IMR-90 (cell line): ENCODE measurements at regions of chr2 and their contacts with region 1.

Region 1: GRCh38 chr2:69816923-69817542 is 12.4 kb upstream of the GMCL1 start:
- DNase-seq: peak; percentile 89
- ATAC-seq: peak; percentile 72; the same call in 1 of the 2 replicates
- H3K4me3 ChIP-seq: no peak overlapping the region
- H3K27ac ChIP-seq: no peak overlapping the region
- H3K4me1 ChIP-seq: 0 out of 2 replicates have a peak, but pooled peaks cover 3% of the 10 kb centered on the region
- H3K27me3 ChIP-seq: no peaks in the 10 kb centered on the region
- CTCF ChIP-seq: peak; percentile 86
- POLR2A ChIP-seq: no peak
- RAD21 ChIP-seq: peak; percentile 77

Region 2: GRCh38 chr2:69559442-69560146 is 257.4 kb before region 1 on chr2:
- CTCF ChIA-PET with region 1: interaction called, 3 read pairs
- POLR2A ChIA-PET with region 1: no interaction called
- dilution Hi-C with region 1: no loop called
- in situ Hi-C with region 1: loop called (anchors 10 kb)
- intact Hi-C with region 1: loop called (anchors 10 kb)
- DNase-seq: peak; percentile 62
- ATAC-seq: peak; percentile 74
- H3K4me3 ChIP-seq: no peak overlapping the region
- H3K27ac ChIP-seq: no peak overlapping the region
- H3K4me1 ChIP-seq: peaks cover 18% of the 10 kb centered on the region
- H3K27me3 ChIP-seq: no peaks in the 10 kb centered on the region
- CTCF ChIP-seq: peak; percentile 66
- POLR2A ChIP-seq: no peak
- RAD21 ChIP-seq: peak; percentile 81

Region 3: DNA sequence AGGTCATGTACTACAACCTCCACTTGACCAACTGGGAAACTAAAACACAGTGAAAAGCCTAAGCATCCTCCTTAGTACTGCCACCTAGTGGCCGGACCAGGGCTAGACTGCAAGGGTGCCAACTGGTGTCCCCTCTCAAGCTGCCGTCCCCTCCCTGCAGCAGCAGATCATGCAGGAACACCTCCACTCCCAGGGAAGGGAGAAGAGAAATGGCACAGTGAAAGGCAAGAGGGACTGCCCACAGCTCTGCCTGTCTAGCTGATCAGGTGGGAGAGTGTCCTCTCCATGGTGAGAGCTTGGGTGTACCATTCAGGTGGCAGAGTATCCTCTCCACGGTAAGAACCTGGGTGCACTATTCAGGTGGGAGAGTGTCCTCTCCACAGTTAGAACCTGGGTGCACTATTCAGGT is 251.6 kb before region 1 on chr2:
- CTCF ChIA-PET with region 1: interaction called, 3 read pairs
- POLR2A ChIA-PET with region 1: no interaction called
- dilution Hi-C with region 1: no loop called
- in situ Hi-C with region 1: loop called (anchors 10 kb)
- intact Hi-C with region 1: no loop called
- DNase-seq: no peak
- ATAC-seq: no peak
- H3K4me3 ChIP-seq: no peak overlapping the region
- H3K27ac ChIP-seq: no peak overlapping the region
- H3K4me1 ChIP-seq: peaks cover 30% of the 10 kb centered on the region
- H3K27me3 ChIP-seq: no peaks in the 10 kb centered on the region
- CTCF ChIP-seq: peak; percentile 47
- POLR2A ChIP-seq: no peak
- RAD21 ChIP-seq: peak; percentile 18; the same call in 1 of the 2 replicates

Region 4: DNA sequence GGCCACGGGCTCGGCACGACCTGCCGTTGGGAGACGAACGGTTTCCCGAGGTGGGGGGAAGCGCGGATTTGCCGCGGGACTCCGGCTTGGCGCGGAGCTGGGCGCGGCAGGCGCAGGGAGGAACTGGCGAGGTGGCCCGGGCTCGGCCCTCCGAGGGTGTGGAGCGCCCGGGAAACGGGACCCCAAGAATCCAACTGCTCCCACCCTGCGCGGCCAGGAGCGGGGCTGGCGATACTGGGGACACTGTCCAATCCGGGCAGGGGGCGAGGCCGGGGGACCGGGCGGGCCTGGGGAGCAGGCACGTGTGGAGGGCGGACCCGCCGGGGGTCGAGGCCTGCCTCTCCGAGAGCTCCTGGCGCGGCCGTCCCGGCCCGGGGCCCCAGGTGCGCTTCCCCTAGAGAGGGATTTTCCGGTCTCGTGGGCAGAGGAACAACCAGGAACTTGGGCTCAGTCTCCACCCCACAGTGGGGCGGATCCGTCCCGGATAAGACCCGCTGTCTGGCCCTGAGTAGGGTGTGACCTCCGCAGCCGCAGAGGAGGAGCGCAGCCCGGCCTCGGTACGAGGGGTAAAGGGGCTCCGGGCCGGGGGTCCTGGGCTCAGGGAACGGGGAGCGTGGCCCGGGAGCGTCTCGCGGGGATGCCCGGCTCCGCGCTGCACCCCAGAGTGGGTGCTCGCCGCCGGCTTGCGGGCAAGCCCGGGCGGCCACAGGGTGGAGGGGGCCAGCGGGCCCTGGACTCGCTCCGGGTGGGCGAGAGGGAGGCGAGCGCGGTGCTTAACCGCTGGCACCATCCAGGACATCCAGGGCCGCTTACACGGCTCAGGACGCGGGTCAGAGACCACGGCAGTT is 75.2 kb before region 1 on chr2 and contains the start of gene ANXA4:
- CTCF ChIA-PET with region 1: interaction called, 5 read pairs
- POLR2A ChIA-PET with region 1: interaction called, 4 read pairs
- dilution Hi-C with region 1: no loop called
- in situ Hi-C with region 1: no loop called
- intact Hi-C with region 1: loop called (anchors 5 kb)
- DNase-seq: peak; percentile 58
- ATAC-seq: peak; percentile 92
- H3K4me3 ChIP-seq: peak within 1 kb of the TSS; percentile 89
- H3K27ac ChIP-seq: peak within 1 kb of the TSS; percentile 79
- H3K4me1 ChIP-seq: peaks cover 2% of the 10 kb centered on the region
- H3K27me3 ChIP-seq: no peaks in the 10 kb centered on the region
- CTCF ChIP-seq: no peak
- POLR2A ChIP-seq: no peak
- RAD21 ChIP-seq: no peak
- total RNA-seq, gene ANXA4: 22.2 and 25.8 TPM in 2 replicates

Region 5: DNA sequence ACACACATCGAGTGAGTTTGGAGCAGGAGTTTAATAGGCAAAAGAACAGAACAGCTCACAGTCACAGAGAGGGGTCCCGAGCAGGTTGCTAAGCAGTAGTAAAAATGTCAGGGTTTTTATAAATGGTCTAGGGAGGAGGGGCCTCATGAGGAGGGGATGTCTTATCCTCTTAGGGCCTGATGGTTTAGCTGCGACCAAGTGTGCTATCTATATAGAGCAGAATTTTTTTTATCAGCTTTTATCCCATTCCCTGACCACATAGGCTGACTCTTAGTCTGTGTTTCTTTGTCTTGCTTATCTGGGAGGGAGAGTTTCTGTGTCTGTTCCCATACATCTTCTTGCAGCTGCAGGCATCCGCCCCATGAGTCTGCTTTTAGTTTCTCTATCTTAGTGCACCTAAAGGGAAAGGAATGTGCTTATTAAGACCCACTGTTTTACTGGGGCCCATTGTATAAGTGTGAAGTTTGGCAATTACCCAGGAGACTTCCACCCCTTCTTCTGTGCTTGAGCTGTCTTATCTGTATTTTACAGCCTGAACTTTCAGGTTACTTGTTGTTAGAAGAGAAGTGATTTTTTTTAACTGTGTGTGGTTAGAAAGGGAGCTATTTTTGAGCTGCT is 18.0 kb before region 1 on chr2:
- CTCF ChIA-PET with region 1: interaction called, 11 read pairs
- POLR2A ChIA-PET with region 1: no interaction called
- dilution Hi-C with region 1: no loop called
- in situ Hi-C with region 1: no loop called
- intact Hi-C with region 1: no loop called
- DNase-seq: peak; percentile 84
- ATAC-seq: peak; percentile 67
- H3K4me3 ChIP-seq: no peak overlapping the region
- H3K27ac ChIP-seq: no peak overlapping the region
- H3K4me1 ChIP-seq: peaks cover 7% of the 10 kb centered on the region; the same call in 1 of the 2 replicates
- H3K27me3 ChIP-seq: no peaks in the 10 kb centered on the region
- CTCF ChIP-seq: no peak
- POLR2A ChIP-seq: no peak
- RAD21 ChIP-seq: no peak

Region 6: GRCh38 chr2:69829256-69830046 is 12.4 kb after region 1 on chr2 and contains the start of gene GMCL1:
- CTCF ChIA-PET with region 1: interaction called, 10 read pairs
- POLR2A ChIA-PET with region 1: no interaction called
- dilution Hi-C with region 1: no loop called
- in situ Hi-C with region 1: no loop called
- intact Hi-C with region 1: no loop called
- DNase-seq: peak; percentile 94
- ATAC-seq: peak; percentile 95
- H3K4me3 ChIP-seq: peak within 1 kb of the TSS; percentile 58
- H3K27ac ChIP-seq: peak within 1 kb of the TSS; percentile 80
- H3K4me1 ChIP-seq: 0 out of 2 replicates have a peak, but pooled peaks cover 2% of the 10 kb centered on the region
- H3K27me3 ChIP-seq: no peaks in the 10 kb centered on the region
- CTCF ChIP-seq: no peak
- POLR2A ChIP-seq: peak; percentile 86
- RAD21 ChIP-seq: no peak
- total RNA-seq, gene GMCL1: 3.4 and 6.1 TPM in 2 replicates